H1 (cell line): ENCODE measurements at regions of chr7 and their contacts with region 1.

Region 1: DNA sequence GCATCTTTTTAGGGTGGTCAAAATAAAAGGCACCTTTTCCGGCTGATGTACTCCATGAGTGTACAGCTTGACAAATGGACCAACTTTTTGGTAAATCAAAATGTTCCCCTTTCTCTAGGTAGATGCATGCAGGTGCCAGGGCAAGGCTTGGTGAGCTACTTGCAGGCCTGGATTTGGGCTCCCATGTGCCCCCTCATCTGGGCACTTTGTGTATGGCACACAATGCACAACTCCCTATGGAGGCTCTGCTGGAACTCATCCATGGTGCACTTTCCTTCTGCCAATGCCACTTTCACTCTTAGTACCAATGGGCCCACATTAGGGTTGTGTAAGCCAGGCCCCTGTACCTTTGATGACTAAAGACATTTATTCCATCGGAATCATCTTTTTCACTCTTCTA is 300.8 kb downstream of the SDHAF3 start:
- DNase-seq: peak in 1 of 2 experiments; percentile 51
- H3K4me3 ChIP-seq: no peak overlapping the region
- H3K27ac ChIP-seq: no peak overlapping the region
- H3K4me1 ChIP-seq: no peaks in the 10 kb centered on the region
- H3K27me3 ChIP-seq: no peaks in the 10 kb centered on the region
- CTCF ChIP-seq: peak; percentile 40 to 63 (median 41)
- EP300 ChIP-seq: no peak
- POLR2A ChIP-seq: no peak
- RAD21 ChIP-seq: peak; percentile 48 to 59

Region 2: GRCh38 chr7:97337849-97338248 is 80.5 kb before region 1 on chr7:
- CTCF ChIA-PET with region 1: no interaction called
- POLR2A ChIA-PET with region 1: no interaction called
- DNase-seq: no peak
- H3K4me3 ChIP-seq: no peak overlapping the region
- H3K27ac ChIP-seq: no peak overlapping the region
- H3K4me1 ChIP-seq: peaks cover 0 to 2% (median 0%) of the 10 kb centered on the region in 4 experiments; a peak in 2 of 7 replicates
- H3K27me3 ChIP-seq: no peaks in the 10 kb centered on the region
- CTCF ChIP-seq: no peak
- EP300 ChIP-seq: no peak
- POLR2A ChIP-seq: no peak
- RAD21 ChIP-seq: no peak

Region 3: DNA sequence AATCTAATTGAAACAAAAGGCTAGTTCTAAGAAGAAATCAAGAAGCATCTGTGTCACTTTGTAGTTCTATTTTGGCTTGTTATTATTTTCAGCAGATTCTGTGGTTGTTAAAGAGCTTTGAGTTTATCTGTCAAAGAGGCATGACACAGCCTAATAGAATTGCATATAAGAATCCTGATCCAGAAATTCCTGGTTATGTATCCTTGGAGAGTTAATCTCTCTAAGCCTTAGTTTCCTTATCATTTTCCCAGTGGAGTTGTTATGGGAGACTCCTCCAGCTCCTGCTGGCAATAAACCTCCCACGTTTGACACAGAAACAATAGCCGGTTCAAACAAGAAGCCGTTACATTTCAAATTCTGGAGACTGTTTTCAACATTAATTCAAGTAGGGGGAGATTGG is 12.5 kb before region 1 on chr7:
- CTCF ChIA-PET with region 1: interaction called, 26 read pairs
- POLR2A ChIA-PET with region 1: no interaction called
- DNase-seq: no peak
- H3K4me3 ChIP-seq: no peak overlapping the region
- H3K27ac ChIP-seq: no peak overlapping the region
- H3K4me1 ChIP-seq: 0 out of 7 replicates have a peak, but pooled peaks cover 0 to 2% (median 0%) of the 10 kb centered on the region in 4 experiments
- H3K27me3 ChIP-seq: no peaks in the 10 kb centered on the region
- CTCF ChIP-seq: no peak
- EP300 ChIP-seq: no peak
- POLR2A ChIP-seq: no peak
- RAD21 ChIP-seq: no peak